Dorsolateral prefrontal cortex (tissue), 120 donors: ENCODE measurements at regions of chr5 and their contacts with region 1.

Region 1: GRCh38 chr5:139262742-139263445 is 30.6 kb upstream of the MATR3 start:
- DNase-seq: peak; percentile 78 to 94 (median 90)
- H3K4me3 ChIP-seq: peak overlapping the region in 4 of 59 donors; percentile 1 to 26 (median 16)
- H3K27ac ChIP-seq: peak overlapping the region in 56 of 59 donors; percentile 7 to 97 (median 71)
- H3K27me3 ChIP-seq: no peaks in the 10 kb centered on the region
- CTCF ChIP-seq: peak; percentile 64 to 99 (median 95)

Region 2: DNA sequence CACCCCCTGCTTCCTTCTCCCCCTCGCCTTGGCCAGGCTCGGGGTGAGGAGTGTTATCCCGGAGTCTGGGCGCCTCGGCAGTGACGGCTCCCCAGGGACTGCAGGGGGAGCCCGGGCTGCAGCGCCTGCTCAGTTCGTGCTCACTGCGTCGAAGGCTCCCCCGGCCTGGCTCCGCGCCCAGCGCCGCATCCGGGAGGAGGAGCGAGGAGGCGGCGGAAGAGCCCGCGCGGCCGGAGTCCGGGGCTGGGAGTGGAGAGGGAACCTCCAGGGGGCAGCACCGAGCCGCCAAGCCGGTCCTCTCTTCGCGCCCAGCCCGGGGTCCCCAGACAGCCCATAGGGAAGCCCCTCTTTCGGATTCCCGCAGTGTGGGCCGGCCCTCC is 798.9 kb before region 1 on chr5:
- intact Hi-C with region 1: loop called in 1 of 2 experiments (anchors 10 kb)
- DNase-seq: peak; percentile 80 to 94 (median 91)
- H3K4me3 ChIP-seq: peak overlapping the region; percentile 66 to 100 (median 89)
- H3K27ac ChIP-seq: peak overlapping the region; percentile 82 to 99 (median 96)
- H3K27me3 ChIP-seq: no peaks in the 10 kb centered on the region
- CTCF ChIP-seq: peak; percentile 67 to 97 (median 89)

Region 3: GRCh38 chr5:138641547-138642298 is 621.2 kb before region 1 on chr5:
- intact Hi-C with region 1: loop called (anchors 2 to 10 kb)
- DNase-seq: peak in 9 of 10 donors; percentile 22 to 86 (median 77)
- H3K4me3 ChIP-seq: no peak overlapping the region
- H3K27ac ChIP-seq: peak overlapping the region in 40 of 59 donors; percentile 2 to 81 (median 58)
- H3K27me3 ChIP-seq: no peaks in the 10 kb centered on the region
- CTCF ChIP-seq: peak; percentile 60 to 91 (median 82)

Region 4: DNA sequence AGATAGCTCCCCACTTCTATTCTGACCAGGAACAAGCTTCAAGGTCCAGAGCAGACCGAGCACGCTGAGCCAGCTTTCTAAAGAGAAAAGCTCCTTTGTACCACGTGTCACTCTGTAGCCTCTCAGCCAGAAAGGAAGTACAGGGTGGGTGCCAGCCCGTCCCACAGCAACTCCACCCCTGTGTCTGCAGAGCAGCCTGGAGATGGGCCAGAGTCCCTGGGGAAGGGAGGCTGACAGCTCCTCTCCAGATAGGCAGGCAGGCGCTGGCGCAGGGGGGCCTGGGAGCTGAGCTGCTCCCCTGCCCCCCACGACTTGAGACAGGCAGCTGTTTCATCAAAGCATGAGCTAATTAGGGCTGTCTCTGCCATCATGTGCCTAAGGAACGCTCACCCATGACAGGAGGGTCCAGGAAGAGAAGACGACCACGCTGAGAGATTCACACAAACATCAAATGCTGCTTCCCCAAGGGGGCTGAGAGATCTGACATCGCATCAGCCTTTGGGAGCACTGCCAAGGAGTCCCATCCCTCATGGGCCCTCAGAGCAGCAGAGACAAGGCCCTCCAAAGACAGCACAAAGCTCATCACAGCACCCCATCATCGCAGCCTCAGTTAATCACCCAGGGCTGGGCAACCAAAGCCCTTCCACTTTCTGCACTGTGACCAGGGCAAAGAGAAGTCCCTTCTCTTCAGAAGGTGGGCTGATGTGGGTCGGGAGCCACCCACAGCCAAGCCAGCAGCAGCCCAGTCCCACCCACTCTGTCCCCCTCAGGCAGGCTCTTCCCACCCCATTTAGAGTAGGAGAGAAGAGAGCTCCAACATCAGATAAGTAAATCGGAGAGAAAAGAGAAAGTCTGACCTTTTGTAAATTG is 309.3 kb before region 1 on chr5:
- intact Hi-C with region 1: loop called in 1 of 2 experiments (anchors 10 kb)
- DNase-seq: peak; percentile 69 to 95 (median 92)
- H3K4me3 ChIP-seq: peak overlapping the region in 27 of 59 donors; percentile 1 to 43 (median 19)
- H3K27ac ChIP-seq: peak overlapping the region; percentile 78 to 99 (median 96)
- H3K27me3 ChIP-seq: no peaks in the 10 kb centered on the region
- CTCF ChIP-seq: peak in 7 of 56 donors; percentile 2 to 19 (median 13)

Region 5: GRCh38 chr5:139197710-139198669 is 64.9 kb before region 1 on chr5 and contains the start of gene SIL1:
- intact Hi-C with region 1: loop called in 1 of 2 experiments (anchors 5 kb)
- DNase-seq: peak; percentile 92 to 98 (median 96)
- H3K4me3 ChIP-seq: peak within 1 kb of the TSS; percentile 55 to 100 (median 85)
- H3K27ac ChIP-seq: peak within 1 kb of the TSS; percentile 44 to 98 (median 92)
- H3K27me3 ChIP-seq: no peaks in the 10 kb centered on the region
- CTCF ChIP-seq: peak in 34 of 56 donors; percentile 5 to 61 (median 35)
- total RNA-seq, gene SIL1: 21.5 to 48.7 (median 34.1) TPM